ENCODE measurements at regions of chr1 and their contacts with region 1.

Region 1: GRCh38 chr1:156282479-156283222 is at the start of gene SMG5:
- DNase-seq: peak; percentile 98
- H3K4me3 Mint-ChIP-seq: peak within 1 kb of the TSS; percentile 97
- H3K27ac Mint-ChIP-seq: peak within 1 kb of the TSS; percentile 94
- H3K4me1 Mint-ChIP-seq: peaks cover 38% of the 10 kb centered on the region
- H3K27me3 Mint-ChIP-seq: no peaks in the 10 kb centered on the region
- total RNA-seq, gene SMG5: 68.0 to 68.1 TPM

Region 2: DNA sequence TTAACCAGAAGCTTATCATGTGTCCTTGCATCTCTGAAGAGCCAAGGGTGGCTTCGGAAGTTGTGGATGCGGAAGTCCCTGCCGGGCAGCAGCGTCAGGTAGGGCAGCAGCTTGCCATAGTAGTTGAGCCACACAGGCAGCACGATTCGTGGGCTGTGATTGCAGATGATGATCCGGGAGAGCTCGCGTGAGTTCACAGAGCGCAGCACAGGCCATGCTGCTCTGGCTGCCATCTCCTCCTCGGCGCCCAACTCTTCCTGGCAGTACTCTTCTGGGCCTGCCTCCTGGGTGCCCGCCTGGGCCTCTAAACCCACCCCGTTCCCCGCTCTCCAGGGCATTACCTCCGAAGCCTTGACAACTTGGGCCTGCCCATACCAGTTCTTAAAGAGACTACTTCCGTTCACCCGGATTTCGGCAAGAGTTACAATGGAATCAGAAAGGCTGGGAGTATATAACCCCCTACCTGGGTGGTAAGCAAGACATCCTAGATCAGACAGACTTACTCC is 16.3 kb after region 1 on chr1 and contains the start of gene VHLL:
- CTCF ChIA-PET with region 1: interaction called, 11 read pairs
- POLR2A ChIA-PET with region 1: no interaction called
- DNase-seq: no peak
- H3K4me3 Mint-ChIP-seq: no peak within 1 kb of the TSS
- H3K27ac Mint-ChIP-seq: peak within 1 kb of the TSS; percentile 31
- H3K4me1 Mint-ChIP-seq: peaks cover 19% of the 10 kb centered on the region
- H3K27me3 Mint-ChIP-seq: no peaks in the 10 kb centered on the region
- total RNA-seq, gene VHLL: 0.52 TPM in 1 of 2 experiments, not detected in the other

Region 3: DNA sequence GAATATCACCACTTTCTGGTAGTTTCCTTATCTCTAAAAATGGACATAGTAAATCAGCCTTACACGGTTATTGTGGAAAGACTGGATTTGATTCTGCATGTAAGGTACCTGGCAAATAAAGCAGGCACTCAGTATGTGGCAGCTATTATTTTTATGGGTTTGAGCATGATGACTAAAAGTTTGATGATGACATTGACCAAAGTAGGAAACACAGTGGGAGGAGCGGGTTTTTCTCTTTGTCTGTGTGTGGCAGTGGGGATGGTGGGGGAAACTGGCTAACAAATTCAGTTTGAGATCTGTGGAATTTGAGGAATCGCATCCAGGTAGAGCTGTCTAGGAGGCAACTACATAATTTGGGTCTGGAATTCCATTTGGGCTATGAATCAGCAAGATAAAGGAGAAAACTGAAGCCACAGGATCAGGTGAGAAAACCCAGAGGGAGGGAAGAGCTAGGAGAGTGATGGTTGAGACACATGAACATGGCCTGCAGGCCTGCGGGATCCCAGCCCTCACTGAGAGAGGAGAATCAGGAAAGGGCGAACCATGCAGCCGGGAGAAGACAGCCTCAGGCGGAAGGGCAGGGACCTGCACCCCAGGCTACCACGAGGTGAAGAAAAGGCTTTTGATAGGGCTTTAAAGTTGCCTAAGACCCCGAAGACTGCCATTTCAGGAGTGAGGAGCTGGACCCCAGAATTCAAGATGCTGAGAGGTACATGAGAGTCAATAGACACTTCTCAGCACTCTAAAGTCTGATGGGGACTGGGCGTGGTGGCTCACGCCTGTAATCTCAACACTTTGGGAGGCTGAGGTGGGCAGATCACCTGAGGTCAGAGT is 165.7 kb after region 1 on chr1:
- CTCF ChIA-PET with region 1: no interaction called
- POLR2A ChIA-PET with region 1: no interaction called
- DNase-seq: no peak
- H3K4me3 Mint-ChIP-seq: no peak overlapping the region
- H3K27ac Mint-ChIP-seq: no peak overlapping the region
- H3K4me1 Mint-ChIP-seq: peaks cover 8% of the 10 kb centered on the region
- H3K27me3 Mint-ChIP-seq: peaks cover 51% of the 10 kb centered on the region